GM12878 (cell line): ENCODE measurements at regions of chr11 and their contacts with region 1.

Region 1: DNA sequence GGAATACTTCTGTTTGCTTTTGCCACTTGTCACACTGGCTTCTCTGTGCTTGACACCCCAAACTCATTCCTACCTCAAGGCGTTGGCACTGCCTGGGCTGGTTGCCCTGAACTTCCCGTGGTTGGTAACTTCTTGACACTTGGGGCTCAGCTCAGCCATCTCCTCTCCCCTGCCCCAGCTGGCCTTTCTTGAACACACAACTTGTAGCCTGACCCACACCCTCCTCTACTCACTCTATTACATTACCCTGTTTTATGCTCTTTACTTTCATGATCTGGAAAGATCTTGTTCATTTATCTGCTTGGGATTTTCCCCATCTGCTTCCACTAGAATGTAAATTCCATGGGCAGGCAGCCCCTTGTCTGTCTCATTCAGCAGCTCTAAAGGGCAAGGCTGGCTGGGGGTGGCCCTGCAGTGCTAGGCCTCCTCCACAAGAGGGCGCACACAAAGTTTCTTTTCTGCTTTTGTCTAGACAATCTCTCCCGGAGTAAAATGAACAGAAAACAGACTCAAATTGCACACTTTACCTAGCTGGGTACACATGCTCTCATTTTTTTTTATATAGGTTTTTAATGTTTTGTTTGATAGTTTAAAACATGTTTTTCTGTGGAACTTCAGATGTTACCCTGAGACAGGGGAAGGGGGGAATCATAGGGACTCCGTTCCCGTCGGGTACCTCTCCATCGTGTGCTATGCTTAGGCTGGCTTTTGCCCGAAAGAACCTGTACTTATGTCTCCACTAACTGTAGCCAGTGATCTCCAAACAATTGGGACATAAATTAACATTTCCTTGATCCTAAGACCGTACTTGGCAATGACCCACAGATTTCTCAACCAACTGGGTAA is 16.4 kb upstream of the MRGPRX2 start:
- DNase-seq: no peak
- ATAC-seq: peak; percentile 89
- H3K4me3 ChIP-seq: no peak overlapping the region
- H3K27ac ChIP-seq: no peak overlapping the region
- H3K4me1 ChIP-seq: no peaks in the 10 kb centered on the region
- H3K27me3 ChIP-seq: no peaks in the 10 kb centered on the region; a peak in 1 of 4 replicates
- CTCF ChIP-seq: peak; percentile 86 to 98 (median 98)
- EP300 ChIP-seq: no peak
- POLR2A ChIP-seq: no peak
- RAD21 ChIP-seq: peak; percentile 59

Region 2: GRCh38 chr11:19040051-19040450 is 36.9 kb before region 1 on chr11:
- CTCF ChIA-PET with region 1: no interaction called
- POLR2A ChIA-PET with region 1: no interaction called
- RAD21 ChIA-PET with region 1: no interaction called
- SMC1A ChIA-PET with region 1: no interaction called
- in situ Hi-C with region 1: no loop called
- intact Hi-C with region 1: no loop called
- DNase-seq: no peak
- ATAC-seq: no peak
- H3K4me3 ChIP-seq: no peak overlapping the region
- H3K27ac ChIP-seq: no peak overlapping the region
- H3K4me1 ChIP-seq: no peaks in the 10 kb centered on the region
- H3K27me3 ChIP-seq: no peaks in the 10 kb centered on the region
- CTCF ChIP-seq: no peak
- EP300 ChIP-seq: no peak
- POLR2A ChIP-seq: no peak
- RAD21 ChIP-seq: no peak

Region 3: GRCh38 chr11:19091366-19091765 is 14.4 kb after region 1 on chr11:
- CTCF ChIA-PET with region 1: interaction called, 13 read pairs
- POLR2A ChIA-PET with region 1: no interaction called
- RAD21 ChIA-PET with region 1: no interaction called
- SMC1A ChIA-PET with region 1: interaction called, 5 read pairs
- in situ Hi-C with region 1: no loop called
- intact Hi-C with region 1: no loop called
- DNase-seq: no peak
- ATAC-seq: no peak
- H3K4me3 ChIP-seq: no peak overlapping the region
- H3K27ac ChIP-seq: no peak overlapping the region
- H3K4me1 ChIP-seq: no peaks in the 10 kb centered on the region
- H3K27me3 ChIP-seq: no peaks in the 10 kb centered on the region
- CTCF ChIP-seq: no peak
- EP300 ChIP-seq: no peak
- POLR2A ChIP-seq: no peak
- RAD21 ChIP-seq: no peak

Region 4: DNA sequence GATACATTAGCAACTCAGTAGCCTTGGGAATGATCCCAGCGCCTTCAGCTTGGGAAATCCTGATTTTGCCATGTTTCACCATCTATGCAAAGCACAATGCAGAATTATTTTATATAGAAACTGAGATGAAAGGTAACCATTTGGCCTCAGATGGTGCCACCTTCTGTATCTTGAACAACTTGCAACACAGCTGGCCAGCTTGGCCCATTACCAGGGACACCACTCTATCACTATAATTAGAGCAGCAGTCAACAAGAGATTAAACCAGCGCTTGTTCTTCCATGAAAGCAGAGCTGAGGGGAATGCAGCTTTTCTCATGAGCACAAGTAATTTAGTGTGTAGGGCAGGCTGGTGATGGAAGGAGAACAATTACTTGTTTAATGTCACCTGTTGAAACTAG is 33.3 kb after region 1 on chr11:
- CTCF ChIA-PET with region 1: interaction called, 26 read pairs
- POLR2A ChIA-PET with region 1: no interaction called
- RAD21 ChIA-PET with region 1: no interaction called
- SMC1A ChIA-PET with region 1: interaction called, 3 read pairs
- in situ Hi-C with region 1: no loop called
- intact Hi-C with region 1: loop called (anchors 5 kb)
- DNase-seq: no peak
- ATAC-seq: no peak
- H3K4me3 ChIP-seq: no peak overlapping the region
- H3K27ac ChIP-seq: no peak overlapping the region
- H3K4me1 ChIP-seq: no peaks in the 10 kb centered on the region
- H3K27me3 ChIP-seq: no peaks in the 10 kb centered on the region
- CTCF ChIP-seq: no peak
- EP300 ChIP-seq: no peak
- POLR2A ChIP-seq: no peak
- RAD21 ChIP-seq: no peak

Region 5: DNA sequence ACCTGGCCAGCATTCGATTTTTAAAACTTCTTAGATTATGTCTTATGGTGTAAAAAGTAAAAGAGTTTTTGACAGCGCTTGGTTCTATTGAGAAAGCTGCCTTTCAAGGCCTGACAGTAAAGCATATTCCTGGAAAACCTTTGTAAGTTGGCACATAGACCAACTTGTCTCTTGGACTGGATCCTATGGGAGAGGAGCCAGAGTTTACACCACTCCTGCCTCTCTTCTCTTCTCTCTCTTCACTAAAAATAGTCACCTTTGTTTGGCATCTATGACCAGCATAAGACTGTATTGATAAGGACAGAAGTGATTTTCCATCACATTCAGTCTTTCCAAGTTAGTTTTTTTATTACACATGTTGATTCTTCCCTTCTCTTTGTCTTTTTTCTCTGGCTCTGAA is 91.1 kb after region 1 on chr11:
- CTCF ChIA-PET with region 1: interaction called, 10 read pairs
- POLR2A ChIA-PET with region 1: no interaction called
- RAD21 ChIA-PET with region 1: no interaction called
- SMC1A ChIA-PET with region 1: no interaction called
- in situ Hi-C with region 1: no loop called
- intact Hi-C with region 1: no loop called
- DNase-seq: no peak
- ATAC-seq: no peak
- H3K4me3 ChIP-seq: no peak overlapping the region
- H3K27ac ChIP-seq: no peak overlapping the region
- H3K4me1 ChIP-seq: no peaks in the 10 kb centered on the region
- H3K27me3 ChIP-seq: no peaks in the 10 kb centered on the region
- CTCF ChIP-seq: no peak
- EP300 ChIP-seq: no peak
- POLR2A ChIP-seq: no peak
- RAD21 ChIP-seq: no peak

Region 6: GRCh38 chr11:19253153-19253745 is 176.3 kb after region 1 on chr11:
- CTCF ChIA-PET with region 1: interaction called, 38 read pairs
- POLR2A ChIA-PET with region 1: no interaction called
- RAD21 ChIA-PET with region 1: interaction called, 8 read pairs
- SMC1A ChIA-PET with region 1: interaction called, 5 read pairs
- in situ Hi-C with region 1: no loop called
- intact Hi-C with region 1: loop called (anchors 5 kb)
- DNase-seq: no peak
- ATAC-seq: no peak
- H3K4me3 ChIP-seq: no peak overlapping the region
- H3K27ac ChIP-seq: no peak overlapping the region
- H3K4me1 ChIP-seq: no peaks in the 10 kb centered on the region; the same call in 1 of the 2 replicates
- H3K27me3 ChIP-seq: no peaks in the 10 kb centered on the region; a peak in 1 of 4 replicates
- CTCF ChIP-seq: no peak
- EP300 ChIP-seq: no peak
- POLR2A ChIP-seq: no peak
- RAD21 ChIP-seq: no peak

Region 7: DNA sequence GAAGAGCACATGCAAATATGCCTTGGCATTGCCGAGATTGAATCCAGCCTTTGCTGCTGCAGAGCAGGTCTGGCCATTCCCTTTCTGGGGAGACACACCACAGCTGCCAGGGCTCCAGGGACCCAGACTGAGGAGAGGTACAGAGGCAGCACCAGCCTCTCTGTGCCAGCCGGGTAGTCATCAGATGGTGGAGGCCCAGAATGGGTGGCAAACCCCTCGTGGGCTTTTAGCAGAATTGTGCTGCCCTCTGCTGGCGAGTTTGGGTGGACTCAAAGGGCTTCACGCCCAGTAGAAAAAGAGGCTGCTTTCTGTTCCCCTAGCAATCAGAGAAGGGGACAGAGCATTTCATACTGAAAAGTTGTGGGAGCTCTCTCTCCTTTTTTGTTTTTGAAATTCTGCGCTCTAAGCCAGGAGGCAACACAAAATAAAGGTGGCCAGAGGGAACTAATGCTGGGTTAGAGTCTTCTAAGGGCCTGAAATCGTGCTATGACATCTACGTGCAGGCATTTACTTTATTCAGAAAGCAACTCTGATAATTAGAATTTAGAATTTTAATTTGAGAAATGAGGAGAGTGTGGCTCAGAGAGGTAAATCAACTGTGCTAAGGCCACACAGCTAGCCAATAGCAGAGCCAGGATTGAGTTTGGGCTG is 476.8 kb after region 1 on chr11:
- CTCF ChIA-PET with region 1: interaction called, 77 read pairs
- POLR2A ChIA-PET with region 1: no interaction called
- RAD21 ChIA-PET with region 1: interaction called, 7 read pairs
- SMC1A ChIA-PET with region 1: interaction called, 3 read pairs
- in situ Hi-C with region 1: loop called (anchors 5 kb)
- intact Hi-C with region 1: loop called (anchors 1 kb)
- DNase-seq: no peak
- ATAC-seq: peak; percentile 94
- H3K4me3 ChIP-seq: no peak overlapping the region
- H3K27ac ChIP-seq: no peak overlapping the region
- H3K4me1 ChIP-seq: peaks cover 13% of the 10 kb centered on the region
- H3K27me3 ChIP-seq: no peaks in the 10 kb centered on the region; a peak in 1 of 4 replicates
- CTCF ChIP-seq: peak; percentile 77 to 94 (median 82)
- EP300 ChIP-seq: no peak
- POLR2A ChIP-seq: no peak
- RAD21 ChIP-seq: peak; percentile 97